CD4-positive, alpha-beta T cell (primary cell): ENCODE measurements at regions of chr12 and their contacts with region 1.

Region 1: DNA sequence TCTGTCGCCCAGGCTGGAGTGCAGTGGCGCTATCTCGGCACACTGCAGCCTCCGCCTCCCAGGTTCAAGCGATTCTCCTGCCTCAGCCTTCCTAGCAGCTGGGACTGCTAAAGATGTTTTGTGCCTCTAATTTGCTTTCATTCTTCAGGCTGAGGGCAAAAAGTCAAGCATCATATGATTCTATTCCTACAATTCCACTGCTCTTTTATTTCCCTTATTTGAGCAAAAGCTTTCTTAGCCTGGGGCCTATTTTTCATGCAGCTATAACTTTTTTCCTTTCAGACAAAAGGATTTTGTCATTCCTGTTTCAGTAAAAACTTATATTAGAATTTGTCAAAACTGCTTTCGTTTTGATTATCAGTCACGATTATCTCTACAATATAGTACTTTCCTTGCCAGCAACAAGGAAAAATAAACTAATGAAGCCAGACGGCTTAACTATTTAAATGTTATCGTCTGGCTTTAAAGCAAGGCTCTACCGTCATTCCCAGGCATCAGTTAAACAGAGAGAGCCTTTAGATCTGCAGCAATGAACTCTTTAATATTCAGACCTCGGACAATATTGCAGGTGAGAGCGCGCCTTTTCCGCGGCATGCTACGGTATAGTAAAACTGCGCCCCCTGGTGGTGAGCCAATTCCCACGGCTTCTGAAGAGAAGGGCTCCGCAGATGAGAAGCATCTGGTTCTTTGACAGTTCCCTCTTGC is 1.4 kb upstream of the SLC2A13 start:
- DNase-seq: peak; percentile 78 to 95 (median 88)
- ATAC-seq: peak; percentile 44
- H3K4me3 ChIP-seq: peak overlapping the region; percentile 63
- H3K4me3 Mint-ChIP-seq: peak overlapping the region; percentile 87
- H3K27ac ChIP-seq: no peak overlapping the region
- H3K27ac Mint-ChIP-seq: peak overlapping the region; percentile 57
- H3K4me1 ChIP-seq: peaks cover 27% of the 10 kb centered on the region
- H3K4me1 Mint-ChIP-seq: peaks cover 32% of the 10 kb centered on the region
- H3K27me3 ChIP-seq: peaks cover 0 to 9% of the 10 kb centered on the region in 2 experiments
- H3K27me3 Mint-ChIP-seq: peaks cover 8% of the 10 kb centered on the region
- CTCF ChIP-seq: peak; percentile 91

Region 2: DNA sequence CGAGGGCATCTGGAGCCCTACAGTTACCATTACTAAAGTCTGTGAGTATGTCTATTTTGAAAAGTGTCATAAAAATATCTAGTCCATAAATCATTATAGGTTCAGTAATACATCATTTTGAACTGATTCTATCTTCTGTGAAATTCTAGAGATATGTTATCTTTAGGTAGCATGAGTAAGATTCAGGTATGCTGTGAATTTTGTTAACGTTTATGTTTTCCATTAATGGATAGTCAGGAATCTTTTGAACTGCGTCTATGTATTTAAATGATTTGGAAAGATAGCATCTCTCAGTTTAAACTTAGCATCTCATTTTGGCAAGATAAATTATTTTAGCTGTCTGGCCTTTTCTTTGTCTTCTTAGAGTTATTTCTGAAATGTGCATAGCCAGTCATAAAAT is 1782.4 kb before region 1 on chr12:
- CTCF ChIA-PET with region 1: no interaction called
- POLR2A ChIA-PET with region 1: no interaction called
- intact Hi-C with region 1: loop called in 1 of 2 experiments (anchors 5 kb)
- DNase-seq: no peak
- ATAC-seq: no peak
- H3K4me3 ChIP-seq: no peak overlapping the region
- H3K4me3 Mint-ChIP-seq: no peak overlapping the region
- H3K27ac ChIP-seq: no peak overlapping the region
- H3K27ac Mint-ChIP-seq: no peak overlapping the region
- H3K4me1 ChIP-seq: no peaks in the 10 kb centered on the region
- H3K4me1 Mint-ChIP-seq: peaks cover 5% of the 10 kb centered on the region
- H3K27me3 ChIP-seq: no peaks in the 10 kb centered on the region
- H3K27me3 Mint-ChIP-seq: no peaks in the 10 kb centered on the region
- CTCF ChIP-seq: no peak

Region 3: DNA sequence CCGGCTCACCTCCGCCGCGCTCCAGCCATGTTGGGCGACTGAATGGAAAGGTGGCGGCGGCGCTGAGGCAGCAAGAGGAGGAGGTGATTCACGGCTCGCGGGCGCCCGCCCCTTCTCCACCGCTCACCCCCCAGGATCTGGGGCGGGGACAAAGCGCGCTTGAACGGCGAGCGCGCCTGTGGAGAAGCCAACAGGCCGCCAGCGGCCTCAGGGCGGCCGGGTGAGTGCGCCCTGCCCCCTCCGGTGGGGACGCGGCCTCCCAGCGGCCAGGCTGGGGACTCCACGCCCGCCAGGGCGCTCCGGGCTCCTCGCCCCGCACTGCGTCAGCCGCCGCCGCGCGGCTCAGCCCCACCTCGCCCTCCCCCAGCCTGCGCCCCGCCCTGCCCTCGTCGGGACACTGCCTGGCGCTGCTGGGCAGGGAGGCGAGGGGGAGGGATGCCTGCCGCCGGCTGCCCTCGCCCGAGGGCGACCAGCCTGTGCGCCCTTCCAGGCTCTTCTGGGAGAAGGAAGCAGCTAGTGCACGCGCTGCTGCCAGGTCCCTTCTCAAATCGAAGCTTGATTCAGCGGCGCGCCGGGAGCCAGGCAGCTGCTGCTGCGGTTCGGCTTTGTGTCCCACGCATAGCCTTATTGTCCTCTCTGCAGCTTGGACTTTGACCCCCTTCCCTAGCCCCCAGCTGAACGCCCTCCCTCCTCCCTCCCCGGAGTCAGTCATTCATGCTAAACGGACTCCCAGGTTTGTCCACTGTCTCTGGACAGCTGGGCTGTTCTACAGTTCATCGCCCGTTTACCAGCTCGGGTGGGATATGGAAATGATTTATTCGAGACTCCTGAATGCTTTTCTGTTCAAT is 663.9 kb before region 1 on chr12 and contains the start of gene KIF21A:
- CTCF ChIA-PET with region 1: no interaction called
- POLR2A ChIA-PET with region 1: no interaction called
- intact Hi-C with region 1: loop called in 1 of 2 experiments (anchors 2 kb)
- DNase-seq: peak; percentile 75 to 97 (median 84)
- ATAC-seq: peak; percentile 87
- H3K4me3 ChIP-seq: peak within 1 kb of the TSS; percentile 78
- H3K4me3 Mint-ChIP-seq: peak within 1 kb of the TSS; percentile 98
- H3K27ac ChIP-seq: peak within 1 kb of the TSS; percentile 18 to 57
- H3K27ac Mint-ChIP-seq: peak within 1 kb of the TSS; percentile 86
- H3K4me1 ChIP-seq: peaks cover 13% of the 10 kb centered on the region
- H3K4me1 Mint-ChIP-seq: peaks cover 18% of the 10 kb centered on the region
- H3K27me3 ChIP-seq: no peaks in the 10 kb centered on the region
- H3K27me3 Mint-ChIP-seq: peaks cover 21% of the 10 kb centered on the region
- CTCF ChIP-seq: peak; percentile 57
- total RNA-seq, gene KIF21A: 3.2 to 3.4 TPM

Region 4: GRCh38 chr12:39619660-39620433 is 487.4 kb before region 1 on chr12 and contains the start of gene ABCD2:
- CTCF ChIA-PET with region 1: no interaction called
- POLR2A ChIA-PET with region 1: interaction called, 4 read pairs
- intact Hi-C with region 1: loop called in 1 of 2 experiments (anchors 10 kb)
- DNase-seq: peak; percentile 45 to 94 (median 61)
- ATAC-seq: peak; percentile 84
- H3K4me3 ChIP-seq: peak within 1 kb of the TSS; percentile 68
- H3K4me3 Mint-ChIP-seq: no peak within 1 kb of the TSS
- H3K27ac ChIP-seq: peak within 1 kb of the TSS; percentile 74 to 89
- H3K27ac Mint-ChIP-seq: no peak within 1 kb of the TSS
- H3K4me1 ChIP-seq: peaks cover 22% of the 10 kb centered on the region
- H3K4me1 Mint-ChIP-seq: peaks cover 35% of the 10 kb centered on the region
- H3K27me3 ChIP-seq: no peaks in the 10 kb centered on the region
- H3K27me3 Mint-ChIP-seq: no peaks in the 10 kb centered on the region
- CTCF ChIP-seq: no peak
- total RNA-seq, gene ABCD2: 1.6 to 2.2 TPM

Region 5: DNA sequence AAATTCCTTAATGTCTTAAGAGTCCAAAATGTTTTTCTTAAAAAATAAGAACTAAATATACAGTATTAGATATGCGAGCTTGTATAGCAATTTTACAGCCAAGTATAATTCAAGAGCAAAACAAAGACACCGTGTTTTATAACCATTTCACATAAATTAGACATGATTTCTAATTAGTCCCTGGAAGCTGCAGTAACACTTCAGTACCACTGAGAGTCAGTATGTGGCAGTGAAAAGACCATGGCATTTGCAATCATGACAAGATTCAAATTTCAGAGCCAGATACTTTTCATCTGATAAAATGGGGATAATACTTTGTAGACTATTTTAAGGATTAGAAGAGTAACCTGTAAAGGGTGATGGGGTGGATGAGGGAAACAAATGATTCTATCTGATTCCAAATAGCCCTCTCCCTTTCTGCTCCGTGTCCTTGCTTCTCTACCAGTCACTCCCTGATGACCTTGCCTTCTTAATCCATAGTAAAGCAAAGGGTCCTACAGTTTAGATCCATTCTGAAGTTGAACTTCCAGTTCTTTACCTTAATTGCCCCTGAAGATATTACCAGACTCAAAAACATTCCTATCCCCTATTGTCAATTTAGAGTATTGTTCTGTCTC is 342.2 kb before region 1 on chr12:
- CTCF ChIA-PET with region 1: no interaction called
- POLR2A ChIA-PET with region 1: no interaction called
- intact Hi-C with region 1: loop called (anchors 1 to 2 kb)
- DNase-seq: peak in 3 of 14 experiments; percentile 31 to 37 (median 31)
- ATAC-seq: peak; percentile 37
- H3K4me3 ChIP-seq: no peak overlapping the region
- H3K4me3 Mint-ChIP-seq: no peak overlapping the region
- H3K27ac ChIP-seq: no peak overlapping the region
- H3K27ac Mint-ChIP-seq: no peak overlapping the region
- H3K4me1 ChIP-seq: no peaks in the 10 kb centered on the region
- H3K4me1 Mint-ChIP-seq: no peaks in the 10 kb centered on the region
- H3K27me3 ChIP-seq: no peaks in the 10 kb centered on the region
- H3K27me3 Mint-ChIP-seq: no peaks in the 10 kb centered on the region
- CTCF ChIP-seq: peak; percentile 41